Activated naive CD4-positive, alpha-beta T cell treated with anti-CD3 and anti-CD28 coated beads, Interleukin-2, amount 10 ng/mL, durations not matched to agents 7 days and 5 days (primary cell): ENCODE measurements at regions of chr16 and their contacts with region 1.

Region 1: DNA sequence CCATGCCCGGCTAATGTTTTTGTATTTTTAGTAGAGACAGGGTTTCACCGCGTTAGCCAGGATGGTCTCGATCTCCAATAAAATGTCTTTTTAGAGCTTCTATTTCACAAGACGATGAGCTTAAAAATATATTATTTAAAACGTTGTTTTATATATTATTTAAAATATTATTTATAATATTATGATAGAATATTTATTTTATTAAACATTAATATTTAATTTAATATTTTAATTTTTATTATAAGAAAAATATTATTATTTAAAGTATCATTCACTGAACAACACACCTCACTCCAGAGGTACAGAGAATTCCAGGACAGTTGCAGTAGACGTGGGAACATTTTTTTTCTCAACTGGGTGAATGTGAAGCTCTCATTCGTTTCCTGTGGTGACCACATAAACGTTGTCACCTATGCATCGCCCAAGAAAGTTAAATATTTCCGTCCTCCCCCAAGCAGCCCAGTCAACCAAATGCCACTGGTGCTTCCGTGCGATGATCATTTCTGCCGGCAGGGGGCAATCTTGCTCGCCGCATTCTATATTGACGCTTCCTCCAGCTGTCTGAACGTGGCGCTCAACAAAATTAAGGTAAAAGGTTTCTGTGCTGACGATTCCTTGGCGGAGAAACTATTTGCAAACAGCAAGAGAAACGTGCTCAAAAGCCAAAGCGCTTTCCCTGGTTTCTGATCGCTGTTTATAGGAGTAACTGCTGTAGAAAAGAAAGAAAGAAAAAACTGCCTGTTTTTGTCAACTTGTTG is 41.7 kb upstream of the PRSS54 start:
- DNase-seq: peak; percentile 90
- H3K4me3 Mint-ChIP-seq: peak overlapping the region; percentile 22
- H3K27ac Mint-ChIP-seq: no peak overlapping the region
- H3K4me1 Mint-ChIP-seq: peaks cover 7% of the 10 kb centered on the region
- H3K27me3 Mint-ChIP-seq: peaks cover 4% of the 10 kb centered on the region

Region 2: GRCh38 chr16:58137581-58137980 is 198.9 kb before region 1 on chr16:
- CTCF ChIA-PET with region 1: no interaction called
- DNase-seq: no peak
- H3K4me3 Mint-ChIP-seq: no peak overlapping the region
- H3K27ac Mint-ChIP-seq: no peak overlapping the region
- H3K4me1 Mint-ChIP-seq: no peaks in the 10 kb centered on the region
- H3K27me3 Mint-ChIP-seq: no peaks in the 10 kb centered on the region

Region 3: DNA sequence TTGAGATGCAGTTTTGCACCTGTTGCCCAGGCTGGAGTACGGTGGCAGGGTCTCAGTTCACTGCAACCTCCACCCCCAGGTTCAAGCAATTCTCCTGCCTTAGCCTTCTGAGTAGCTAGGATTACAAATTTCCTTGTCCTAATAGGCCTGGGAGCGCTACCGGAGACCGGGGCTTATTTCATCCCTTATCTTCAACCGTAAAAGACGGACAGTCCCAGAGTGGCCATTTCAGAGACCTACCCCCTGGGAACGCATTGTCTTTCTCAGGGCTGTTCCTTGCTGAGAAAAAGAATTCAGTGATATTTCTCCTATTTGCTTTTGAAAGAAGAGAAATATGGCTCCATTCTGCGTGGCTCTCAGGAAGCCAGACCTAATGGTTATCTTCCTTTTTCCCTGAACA is 16.2 kb after region 1 on chr16:
- CTCF ChIA-PET with region 1: interaction called, 10 read pairs
- DNase-seq: no peak
- H3K4me3 Mint-ChIP-seq: no peak overlapping the region
- H3K27ac Mint-ChIP-seq: no peak overlapping the region
- H3K4me1 Mint-ChIP-seq: no peaks in the 10 kb centered on the region
- H3K27me3 Mint-ChIP-seq: peaks cover 19% of the 10 kb centered on the region

Region 4: DNA sequence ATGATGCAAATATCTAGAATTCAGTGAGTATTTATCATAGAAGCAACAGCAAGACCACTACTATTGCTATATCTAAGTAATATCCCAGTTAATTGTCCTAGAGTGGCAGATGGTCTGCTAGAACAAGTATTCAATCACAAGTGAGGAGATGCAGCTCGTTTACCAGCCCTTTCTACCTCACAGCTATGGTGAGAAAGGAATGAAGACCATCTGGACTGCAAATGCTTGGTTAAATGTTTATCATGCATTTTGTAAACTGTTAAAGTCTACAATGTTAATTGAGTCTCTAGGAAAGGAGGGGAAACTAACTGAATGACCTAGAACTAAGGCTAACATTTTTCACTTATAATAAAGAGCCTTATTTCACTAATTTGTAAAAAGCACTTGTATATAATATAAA is 240.6 kb after region 1 on chr16:
- CTCF ChIA-PET with region 1: no interaction called
- DNase-seq: no peak
- H3K4me3 Mint-ChIP-seq: no peak overlapping the region
- H3K27ac Mint-ChIP-seq: no peak overlapping the region
- H3K4me1 Mint-ChIP-seq: no peaks in the 10 kb centered on the region
- H3K27me3 Mint-ChIP-seq: no peaks in the 10 kb centered on the region

Region 5: GRCh38 chr16:58906981-58907715 is 570.6 kb after region 1 on chr16:
- CTCF ChIA-PET with region 1: no interaction called
- DNase-seq: no peak
- H3K4me3 Mint-ChIP-seq: no peak overlapping the region
- H3K27ac Mint-ChIP-seq: no peak overlapping the region
- H3K4me1 Mint-ChIP-seq: no peaks in the 10 kb centered on the region
- H3K27me3 Mint-ChIP-seq: no peaks in the 10 kb centered on the region